ENCODE measurements at regions of chr11 and their contacts with region 1.

Region 1: GRCh38 chr11:132824642-132825041 is 707.7 kb downstream of the OPCML start:
- DNase-seq: no peak
- H3K4me3 ChIP-seq: no peak overlapping the region
- H3K27ac ChIP-seq: no peak overlapping the region
- H3K4me1 ChIP-seq: no peaks in the 10 kb centered on the region
- H3K27me3 ChIP-seq: no peaks in the 10 kb centered on the region
- CTCF ChIP-seq: no peak
- POLR2A ChIP-seq: no peak

Region 2: GRCh38 chr11:132373405-132374143 is 451.1 kb before region 1 on chr11:
- intact Hi-C with region 1: loop called (anchors 5 kb)
- DNase-seq: no peak
- H3K4me3 ChIP-seq: no peak overlapping the region
- H3K27ac ChIP-seq: no peak overlapping the region
- H3K4me1 ChIP-seq: no peaks in the 10 kb centered on the region
- H3K27me3 ChIP-seq: no peaks in the 10 kb centered on the region
- CTCF ChIP-seq: no peak
- POLR2A ChIP-seq: no peak

Region 3: GRCh38 chr11:134543642-134544041 is 1719.0 kb after region 1 on chr11:
- intact Hi-C with region 1: no loop called
- DNase-seq: no peak
- H3K4me3 ChIP-seq: no peak overlapping the region
- H3K27ac ChIP-seq: no peak overlapping the region
- H3K4me1 ChIP-seq: no peaks in the 10 kb centered on the region
- H3K27me3 ChIP-seq: no peaks in the 10 kb centered on the region
- CTCF ChIP-seq: no peak
- POLR2A ChIP-seq: no peak